ENCODE measurements at regions of chr18 and their contacts with region 1.

Region 1: DNA sequence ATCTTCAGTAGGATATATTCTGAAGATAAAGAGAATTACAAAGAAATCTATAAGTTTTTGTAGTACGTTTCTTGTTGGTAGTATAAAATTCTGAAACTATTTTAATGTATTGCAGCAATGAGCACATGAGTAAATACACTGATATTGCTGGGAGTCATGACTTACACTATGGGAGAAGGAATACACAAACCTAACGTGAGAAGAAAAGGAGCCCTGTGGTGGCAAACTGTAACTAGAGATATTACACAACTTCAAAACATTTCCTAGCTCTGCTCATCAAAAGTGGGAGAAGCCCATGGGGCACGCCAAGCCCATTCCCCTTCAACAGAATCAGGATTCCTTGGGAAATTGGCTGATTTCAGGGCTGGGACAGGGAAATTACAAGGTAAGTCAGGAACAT is 20.5 kb downstream of the SPIRE1 start:
- DNase-seq: no peak
- H3K4me3 ChIP-seq: no peak overlapping the region
- H3K27ac ChIP-seq: no peak overlapping the region
- H3K4me1 ChIP-seq: no peaks in the 10 kb centered on the region
- H3K27me3 ChIP-seq: no peaks in the 10 kb centered on the region
- CTCF ChIP-seq: no peak

Region 2: GRCh38 chr18:12313530-12314245 is 323.7 kb before region 1 on chr18:
- CTCF ChIA-PET with region 1: no interaction called
- POLR2A ChIA-PET with region 1: interaction called, 13 read pairs
- intact Hi-C with region 1: no loop called
- DNase-seq: peak; percentile 40
- H3K4me3 ChIP-seq: no peak overlapping the region
- H3K27ac ChIP-seq: peak overlapping the region; percentile 54
- H3K4me1 ChIP-seq: peaks cover 36% of the 10 kb centered on the region
- H3K27me3 ChIP-seq: no peaks in the 10 kb centered on the region
- CTCF ChIP-seq: no peak

Region 3: GRCh38 chr18:12711446-12711845 is 74.1 kb after region 1 on chr18:
- CTCF ChIA-PET with region 1: no interaction called
- POLR2A ChIA-PET with region 1: no interaction called
- intact Hi-C with region 1: no loop called
- DNase-seq: no peak
- H3K4me3 ChIP-seq: no peak overlapping the region
- H3K27ac ChIP-seq: no peak overlapping the region
- H3K4me1 ChIP-seq: no peaks in the 10 kb centered on the region
- H3K27me3 ChIP-seq: no peaks in the 10 kb centered on the region
- CTCF ChIP-seq: no peak

Measured in A673 (cell line).